Activated T-helper 1 cell treated with anti-CD3 and anti-CD28 coated beads, Interleukin-12 subunit alpha, Interleukin-12 subunit beta, Interleukin-2, Interleukin-4 antibody, amounts not matched to agents 30 ng/mL and 10 ng/mL and 1 ng/mL, durations not matched to agents 14 hours and 24 hours and 36 hours (primary cell): ENCODE measurements at regions of chr2 and their contacts with region 1.

Region 1: DNA sequence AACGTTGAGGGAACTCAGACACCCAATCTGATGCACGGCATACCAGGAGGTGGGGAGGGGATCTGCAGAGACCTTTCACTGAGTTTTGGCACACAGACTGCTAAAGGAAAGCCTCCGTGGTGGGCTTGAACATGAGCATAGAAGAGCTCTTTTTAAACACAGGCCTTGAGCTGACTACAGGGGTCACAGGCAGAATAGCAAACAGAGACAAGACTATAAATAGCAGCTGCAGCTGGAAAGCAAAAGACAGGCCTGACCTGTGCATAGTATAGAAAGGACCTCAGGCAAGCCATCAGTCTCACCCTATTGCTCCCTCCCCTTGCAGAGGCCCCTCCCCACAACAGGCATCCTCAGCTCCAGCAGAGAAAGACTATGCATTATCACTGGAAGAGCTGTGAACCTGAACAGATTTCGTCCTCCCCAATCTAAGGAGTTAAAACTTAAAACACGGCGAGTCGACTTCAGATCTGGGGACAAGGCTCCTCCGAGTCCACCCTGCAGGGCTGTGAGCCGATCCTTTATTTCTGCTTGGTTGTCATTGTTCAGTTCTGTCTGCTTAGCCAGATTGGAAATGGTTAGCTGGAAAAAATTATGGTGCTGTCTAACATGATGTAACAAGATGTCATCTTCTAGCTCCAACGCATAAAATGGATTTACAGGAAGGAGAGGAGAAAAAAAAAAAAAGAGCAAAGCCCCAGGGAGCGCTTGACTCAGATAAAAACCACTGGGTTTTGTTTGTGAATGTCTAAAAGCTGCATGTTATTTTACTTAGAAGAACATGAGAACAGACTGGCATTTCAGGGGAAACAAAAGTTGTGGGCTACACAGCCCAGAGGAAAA is 25.2 kb upstream of the LCLAT1 start:
- DNase-seq: peak; percentile 11
- H3K4me3 Mint-ChIP-seq: peak overlapping the region; percentile 69
- H3K27ac Mint-ChIP-seq: peak overlapping the region; percentile 92
- H3K4me1 Mint-ChIP-seq: peaks cover 38% of the 10 kb centered on the region
- H3K27me3 Mint-ChIP-seq: no peaks in the 10 kb centered on the region

Region 2: GRCh38 chr2:30072250-30072842 is 349.5 kb before region 1 on chr2:
- intact Hi-C with region 1: no loop called
- DNase-seq: peak; percentile 49
- H3K4me3 Mint-ChIP-seq: no peak overlapping the region
- H3K27ac Mint-ChIP-seq: no peak overlapping the region
- H3K4me1 Mint-ChIP-seq: no peaks in the 10 kb centered on the region
- H3K27me3 Mint-ChIP-seq: peaks cover 9% of the 10 kb centered on the region

Region 3: GRCh38 chr2:30208452-30208851 is 213.4 kb before region 1 on chr2:
- intact Hi-C with region 1: loop called (anchors 1 kb)
- DNase-seq: no peak
- H3K4me3 Mint-ChIP-seq: no peak overlapping the region
- H3K27ac Mint-ChIP-seq: no peak overlapping the region
- H3K4me1 Mint-ChIP-seq: peaks cover 22% of the 10 kb centered on the region
- H3K27me3 Mint-ChIP-seq: peaks cover 6% of the 10 kb centered on the region

Region 4: DNA sequence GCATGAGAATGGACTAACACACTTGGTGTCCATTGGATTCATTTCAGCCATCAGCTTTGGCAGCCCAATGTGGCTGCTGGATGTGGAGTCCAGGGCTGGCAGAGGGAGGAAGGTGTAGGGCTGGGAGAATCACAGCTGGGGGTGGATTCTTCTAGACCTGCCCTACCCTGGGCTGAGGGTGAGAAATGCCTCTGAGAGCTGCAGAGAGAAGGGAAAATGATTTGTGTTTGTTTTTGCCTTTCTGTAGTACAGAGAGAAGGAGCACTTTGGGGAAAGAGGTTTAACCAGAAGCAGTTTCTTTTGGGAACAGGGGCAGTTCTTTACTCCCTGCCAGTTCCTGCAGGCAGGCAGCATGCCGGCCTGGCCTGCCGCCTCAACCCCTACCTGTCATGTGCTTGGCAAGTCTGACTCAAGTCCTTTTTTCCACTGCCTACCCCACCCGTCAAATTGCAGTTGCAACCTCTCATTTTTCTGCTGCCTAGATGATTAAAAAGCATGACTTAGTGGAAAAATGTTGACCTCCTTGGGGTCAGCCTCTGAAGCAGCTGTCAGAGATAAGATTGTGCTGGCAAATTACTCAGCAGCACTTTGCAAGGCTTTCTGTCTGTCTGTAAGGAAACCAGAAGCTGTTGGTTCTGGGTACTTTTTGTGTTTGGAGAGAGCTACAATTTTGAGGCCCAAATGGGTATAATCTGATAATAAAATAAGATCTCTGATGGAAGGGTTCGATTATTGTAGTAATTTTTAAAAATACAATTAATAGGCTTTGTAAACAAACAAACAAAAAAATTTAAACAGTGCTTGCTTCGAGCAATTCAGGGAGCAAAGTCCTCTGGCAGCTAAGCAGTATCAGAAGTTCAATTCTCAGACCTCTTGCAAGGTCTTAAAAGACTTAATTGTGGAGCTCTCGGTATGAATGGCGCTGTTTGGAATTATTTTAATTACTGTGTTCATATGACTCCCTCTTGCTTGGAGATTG is 168.8 kb before region 1 on chr2:
- intact Hi-C with region 1: loop called (anchors 1 kb)
- DNase-seq: peak; percentile 48
- H3K4me3 Mint-ChIP-seq: peak overlapping the region; percentile 53
- H3K27ac Mint-ChIP-seq: peak overlapping the region; percentile 93
- H3K4me1 Mint-ChIP-seq: peaks cover 92% of the 10 kb centered on the region
- H3K27me3 Mint-ChIP-seq: no peaks in the 10 kb centered on the region

Region 5: GRCh38 chr2:30336978-30337841 is 84.6 kb before region 1 on chr2:
- intact Hi-C with region 1: loop called (anchors 1 kb)
- DNase-seq: peak; percentile 60
- H3K4me3 Mint-ChIP-seq: peak overlapping the region; percentile 64
- H3K27ac Mint-ChIP-seq: peak overlapping the region; percentile 94
- H3K4me1 Mint-ChIP-seq: peaks cover 76% of the 10 kb centered on the region
- H3K27me3 Mint-ChIP-seq: no peaks in the 10 kb centered on the region

Region 6: GRCh38 chr2:30404319-30404953 is 17.4 kb before region 1 on chr2:
- intact Hi-C with region 1: loop called (anchors 2 kb)
- DNase-seq: no peak
- H3K4me3 Mint-ChIP-seq: no peak overlapping the region
- H3K27ac Mint-ChIP-seq: no peak overlapping the region
- H3K4me1 Mint-ChIP-seq: peaks cover 33% of the 10 kb centered on the region
- H3K27me3 Mint-ChIP-seq: no peaks in the 10 kb centered on the region

Region 7: GRCh38 chr2:30447149-30448045 is 25.6 kb after region 1 on chr2 and contains the start of gene LCLAT1:
- intact Hi-C with region 1: loop called (anchors 1 kb)
- DNase-seq: peak; percentile 84
- H3K4me3 Mint-ChIP-seq: peak within 1 kb of the TSS; percentile 96
- H3K27ac Mint-ChIP-seq: peak within 1 kb of the TSS; percentile 98
- H3K4me1 Mint-ChIP-seq: peaks cover 42% of the 10 kb centered on the region
- H3K27me3 Mint-ChIP-seq: no peaks in the 10 kb centered on the region
- total RNA-seq, gene LCLAT1: 40.1 and 46.2 TPM in 2 replicates

Region 8: DNA sequence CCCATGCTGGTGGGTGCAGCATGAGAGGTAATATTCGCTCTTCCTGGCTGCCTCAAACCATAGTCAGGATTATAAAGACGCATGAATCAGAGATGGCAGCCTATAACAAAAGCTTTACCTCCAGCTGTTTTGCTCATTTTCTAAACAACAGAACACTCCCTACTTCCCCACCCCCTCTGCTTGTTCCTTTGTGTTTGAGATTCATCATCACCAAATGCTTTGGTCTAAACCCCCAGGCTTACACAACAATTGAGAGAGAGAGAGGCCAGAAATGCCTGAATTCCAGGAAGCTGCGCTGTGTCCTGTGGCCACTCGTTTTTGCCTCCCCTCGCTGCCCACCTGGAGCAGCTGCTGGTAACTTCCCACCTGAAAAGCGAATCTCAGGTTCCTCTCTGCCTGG is 464.3 kb after region 1 on chr2:
- intact Hi-C with region 1: no loop called
- DNase-seq: no peak
- H3K4me3 Mint-ChIP-seq: no peak overlapping the region
- H3K27ac Mint-ChIP-seq: no peak overlapping the region
- H3K4me1 Mint-ChIP-seq: no peaks in the 10 kb centered on the region
- H3K27me3 Mint-ChIP-seq: peaks cover 7% of the 10 kb centered on the region

Region 9: GRCh38 chr2:31318361-31319336 is 896.8 kb after region 1 on chr2:
- intact Hi-C with region 1: loop called (anchors 5 kb)
- DNase-seq: peak; percentile 44
- H3K4me3 Mint-ChIP-seq: peak overlapping the region; percentile 43
- H3K27ac Mint-ChIP-seq: peak overlapping the region; percentile 54
- H3K4me1 Mint-ChIP-seq: peaks cover 58% of the 10 kb centered on the region
- H3K27me3 Mint-ChIP-seq: peaks cover 4% of the 10 kb centered on the region